ENCODE measurements at regions of chr21 and their contacts with region 1.

Region 1: GRCh38 chr21:36113647-36114428 is 21.0 kb upstream of the CBR3 start:
- DNase-seq: no peak

Region 2: DNA sequence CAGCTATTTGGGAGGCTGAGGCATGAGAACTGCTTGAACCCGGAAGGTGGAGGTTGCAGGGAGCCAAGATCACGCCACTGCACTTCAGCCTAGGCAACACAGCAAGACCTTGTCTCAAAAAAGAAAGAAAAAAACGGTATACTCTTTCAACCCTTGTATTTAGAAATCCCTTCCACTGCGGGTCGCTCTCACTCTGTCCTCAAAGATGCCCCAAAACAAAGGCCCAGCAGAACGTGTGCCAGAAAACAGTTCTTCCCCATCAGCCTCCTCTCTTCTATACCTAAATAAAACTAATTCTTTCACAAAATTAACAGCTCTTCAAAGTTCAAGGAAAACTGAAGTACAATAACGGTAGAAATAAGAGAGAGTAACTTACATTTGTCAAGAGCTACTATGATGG is 66.7 kb before region 1 on chr21:
- intact Hi-C with region 1: loop called (anchors 2 kb)
- DNase-seq: peak in 1 of 10 donors; percentile 22

Region 3: DNA sequence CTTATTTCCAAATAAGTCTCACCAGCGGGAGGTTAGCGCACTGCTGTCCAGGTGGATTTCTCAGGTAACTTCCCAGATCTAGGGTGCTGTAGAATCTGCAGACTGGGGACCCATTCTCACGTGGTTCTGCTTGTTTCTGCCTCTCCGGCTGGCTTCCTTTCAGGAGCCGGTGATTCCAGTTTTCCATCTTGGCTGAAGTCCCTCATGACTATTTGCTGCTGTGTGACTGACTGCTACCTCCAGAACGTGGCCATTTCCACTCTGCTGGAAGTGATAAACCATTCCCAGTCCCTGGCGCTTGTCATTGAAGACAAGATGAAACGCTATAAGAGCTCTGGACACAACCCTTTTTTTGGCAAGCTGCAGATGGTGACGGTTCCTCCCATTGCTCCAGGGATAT is 118.8 kb after region 1 on chr21:
- intact Hi-C with region 1: no loop called
- DNase-seq: peak in 1 of 10 donors; percentile 12

Region 4: GRCh38 chr21:37087188-37087587 is 973.4 kb after region 1 on chr21:
- intact Hi-C with region 1: no loop called
- DNase-seq: peak in 2 of 10 donors; percentile 13 to 43

Measured in posterior cingulate gyrus (tissue), 11 donors.